ENCODE measurements at regions of chr17 and their contacts with region 1.

Region 1: GRCh38 chr17:15213381-15214087 is 51.6 kb downstream of the PMP22 start:
- DNase-seq: no peak
- ATAC-seq: no peak
- H3K4me3 ChIP-seq: no peak overlapping the region
- H3K27ac ChIP-seq: no peak overlapping the region
- H3K4me1 ChIP-seq: no peaks in the 10 kb centered on the region
- H3K27me3 ChIP-seq: no peaks in the 10 kb centered on the region
- CTCF ChIP-seq: peak in 2 of 5 experiments; percentile 13 to 47
- POLR2A ChIP-seq: no peak

Region 2: DNA sequence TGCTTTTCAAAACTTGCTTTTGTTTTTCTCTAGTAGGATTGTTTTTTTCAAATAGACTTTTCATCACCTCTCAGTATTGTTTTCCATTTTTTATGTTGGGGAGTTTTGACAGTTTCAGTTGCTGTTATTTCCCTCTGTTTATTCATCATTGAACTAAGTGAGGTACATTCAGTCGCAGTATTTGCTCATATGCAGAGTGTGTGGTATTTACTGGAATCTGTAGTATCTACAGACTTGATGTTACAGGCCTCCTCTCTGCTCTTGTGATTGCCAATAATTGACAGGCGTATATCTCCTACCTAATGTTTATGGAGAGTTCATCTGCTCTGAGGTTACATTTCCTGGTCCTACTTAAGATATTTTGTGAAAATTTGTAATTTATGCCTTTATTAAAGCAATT is 1094.6 kb before region 1 on chr17:
- in situ Hi-C with region 1: loop called in 1 of 4 experiments (anchors 25 kb)
- intact Hi-C with region 1: no loop called
- DNase-seq: no peak
- ATAC-seq: no peak
- H3K4me3 ChIP-seq: no peak overlapping the region
- H3K27ac ChIP-seq: no peak overlapping the region
- H3K4me1 ChIP-seq: peaks cover 12 to 17% of the 10 kb centered on the region in 2 donors
- H3K27me3 ChIP-seq: no peaks in the 10 kb centered on the region
- CTCF ChIP-seq: no peak
- POLR2A ChIP-seq: no peak

Region 3: GRCh38 chr17:15038656-15039055 is 174.9 kb before region 1 on chr17:
- in situ Hi-C with region 1: no loop called
- intact Hi-C with region 1: no loop called
- DNase-seq: no peak
- ATAC-seq: no peak
- H3K4me3 ChIP-seq: no peak overlapping the region
- H3K27ac ChIP-seq: no peak overlapping the region
- H3K4me1 ChIP-seq: no peaks in the 10 kb centered on the region
- H3K27me3 ChIP-seq: no peaks in the 10 kb centered on the region
- CTCF ChIP-seq: no peak
- POLR2A ChIP-seq: no peak

Region 4: GRCh38 chr17:15332338-15332737 is 118.8 kb after region 1 on chr17:
- in situ Hi-C with region 1: no loop called
- intact Hi-C with region 1: no loop called
- DNase-seq: no peak
- ATAC-seq: no peak
- H3K4me3 ChIP-seq: no peak overlapping the region
- H3K27ac ChIP-seq: no peak overlapping the region
- H3K4me1 ChIP-seq: no peaks in the 10 kb centered on the region
- H3K27me3 ChIP-seq: no peaks in the 10 kb centered on the region
- CTCF ChIP-seq: no peak
- POLR2A ChIP-seq: no peak

Region 5: GRCh38 chr17:16189791-16190348 is 976.3 kb after region 1 on chr17:
- in situ Hi-C with region 1: no loop called
- intact Hi-C with region 1: no loop called
- DNase-seq: no peak
- ATAC-seq: peak in 1 of 2 donors; percentile 35
- H3K4me3 ChIP-seq: no peak overlapping the region
- H3K27ac ChIP-seq: peak overlapping the region; percentile 2 to 63 (median 48)
- H3K4me1 ChIP-seq: peaks cover 26 to 29% of the 10 kb centered on the region in 2 donors
- H3K27me3 ChIP-seq: no peaks in the 10 kb centered on the region
- CTCF ChIP-seq: no peak
- POLR2A ChIP-seq: no peak